IMR-90 (cell line): ENCODE measurements at regions of chr4 and their contacts with region 1.

Region 1: GRCh38 chr4:142168181-142168580 is 531.8 kb downstream of the IL15 start:
- DNase-seq: no peak
- ATAC-seq: no peak; the same call in 1 of the 2 replicates
- H3K4me3 ChIP-seq: no peak overlapping the region
- H3K27ac ChIP-seq: peak overlapping the region; percentile 23; the same call in 1 of the 2 replicates
- H3K4me1 ChIP-seq: 0 out of 2 replicates have a peak, but pooled peaks cover 3% of the 10 kb centered on the region
- H3K27me3 ChIP-seq: no peaks in the 10 kb centered on the region
- CTCF ChIP-seq: no peak
- POLR2A ChIP-seq: no peak
- RAD21 ChIP-seq: no peak

Region 2: GRCh38 chr4:142211424-142211823 is 43.2 kb after region 1 on chr4:
- CTCF ChIA-PET with region 1: no interaction called
- POLR2A ChIA-PET with region 1: no interaction called
- dilution Hi-C with region 1: no loop called
- in situ Hi-C with region 1: no loop called
- intact Hi-C with region 1: loop called (anchors 1 kb)
- DNase-seq: no peak
- ATAC-seq: no peak
- H3K4me3 ChIP-seq: no peak overlapping the region
- H3K27ac ChIP-seq: no peak overlapping the region
- H3K4me1 ChIP-seq: no peaks in the 10 kb centered on the region
- H3K27me3 ChIP-seq: no peaks in the 10 kb centered on the region
- CTCF ChIP-seq: no peak
- POLR2A ChIP-seq: no peak
- RAD21 ChIP-seq: no peak

Region 3: DNA sequence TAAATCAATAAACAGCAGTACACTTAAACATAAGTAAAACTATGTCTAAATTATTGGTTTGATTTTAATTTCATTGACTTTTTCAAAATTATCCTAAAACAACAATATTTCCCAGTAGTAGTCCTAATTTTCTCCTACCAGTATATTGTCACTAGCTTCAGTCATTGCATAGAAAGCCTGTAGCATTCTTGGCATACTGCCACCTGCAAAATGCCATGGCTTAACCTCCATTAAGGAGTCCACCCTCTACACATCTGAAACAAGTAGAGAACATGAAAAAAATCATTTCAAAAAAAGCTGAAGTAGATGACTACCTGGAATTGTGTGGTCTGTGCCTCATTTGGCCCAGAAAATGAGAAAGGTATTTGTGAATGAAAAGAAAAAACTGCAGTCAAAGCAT is 329.4 kb after region 1 on chr4:
- CTCF ChIA-PET with region 1: no interaction called
- POLR2A ChIA-PET with region 1: no interaction called
- dilution Hi-C with region 1: no loop called
- in situ Hi-C with region 1: no loop called
- intact Hi-C with region 1: no loop called
- DNase-seq: no peak
- ATAC-seq: no peak
- H3K4me3 ChIP-seq: no peak overlapping the region
- H3K27ac ChIP-seq: no peak overlapping the region
- H3K4me1 ChIP-seq: no peaks in the 10 kb centered on the region; the same call in 1 of the 2 replicates
- H3K27me3 ChIP-seq: no peaks in the 10 kb centered on the region
- CTCF ChIP-seq: no peak
- POLR2A ChIP-seq: no peak
- RAD21 ChIP-seq: no peak